Activated CD8-positive, alpha-beta T cell treated with anti-CD3 and anti-CD28 coated beads for 36 hours (primary cell): ENCODE measurements at regions of chr11 and their contacts with region 1.

Region 1: DNA sequence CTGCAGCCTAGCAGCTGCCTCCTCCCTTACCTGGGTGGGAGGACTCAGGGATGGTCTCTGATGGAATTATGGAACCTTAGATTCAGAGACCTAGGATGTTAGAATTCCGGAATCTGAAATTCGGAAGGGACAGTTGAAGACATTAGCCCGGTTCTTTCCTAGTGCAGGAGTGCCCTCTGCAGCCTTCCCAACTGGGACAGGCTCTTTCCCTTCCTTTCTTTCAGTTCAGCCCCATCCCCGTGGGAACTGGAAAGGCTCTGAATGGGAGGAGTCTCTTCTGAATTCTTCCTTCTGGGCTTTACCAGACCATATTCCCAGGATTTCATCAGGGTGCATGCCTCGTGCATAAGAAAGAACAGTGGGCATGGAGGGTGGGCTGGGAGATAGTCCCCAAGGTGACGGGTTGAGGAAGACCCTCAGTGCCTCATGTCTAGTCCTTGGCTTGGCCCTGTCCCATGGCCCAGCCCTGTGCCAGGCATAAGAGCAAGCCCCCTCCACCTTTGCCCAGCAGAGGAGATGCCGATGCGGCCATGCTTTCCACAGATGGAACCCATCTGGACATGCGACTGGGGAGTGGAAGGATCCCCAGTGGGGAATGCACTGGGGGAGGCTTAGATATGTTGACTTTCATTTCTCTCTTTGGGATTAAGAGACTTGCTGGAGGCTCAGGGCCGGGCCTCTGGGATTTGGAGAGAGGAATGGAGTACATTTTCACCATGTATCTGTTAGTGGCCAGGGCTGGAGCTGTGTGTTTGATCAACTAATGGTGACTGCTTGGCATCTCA is 14.4 kb downstream of the DNAJB13 start:
- DNase-seq: no peak
- ATAC-seq: no peak
- H3K4me3 Mint-ChIP-seq: no peak overlapping the region
- H3K27ac Mint-ChIP-seq: no peak overlapping the region
- H3K4me1 Mint-ChIP-seq: peaks cover 42% of the 10 kb centered on the region
- H3K27me3 Mint-ChIP-seq: no peaks in the 10 kb centered on the region
- CTCF ChIP-seq: no peak

Region 2: GRCh38 chr11:73907191-73907590 is 58.1 kb before region 1 on chr11:
- CTCF ChIA-PET with region 1: no interaction called
- POLR2A ChIA-PET with region 1: no interaction called
- intact Hi-C with region 1: no loop called
- DNase-seq: peak; percentile 39
- ATAC-seq: peak; percentile 82
- H3K4me3 Mint-ChIP-seq: no peak overlapping the region
- H3K27ac Mint-ChIP-seq: peak overlapping the region; percentile 3
- H3K4me1 Mint-ChIP-seq: no peaks in the 10 kb centered on the region
- H3K27me3 Mint-ChIP-seq: no peaks in the 10 kb centered on the region
- CTCF ChIP-seq: no peak

Region 3: GRCh38 chr11:73946798-73947458 is 18.3 kb before region 1 on chr11:
- CTCF ChIA-PET with region 1: interaction called, 10 read pairs
- POLR2A ChIA-PET with region 1: no interaction called
- intact Hi-C with region 1: no loop called
- DNase-seq: no peak
- ATAC-seq: no peak
- H3K4me3 Mint-ChIP-seq: no peak overlapping the region
- H3K27ac Mint-ChIP-seq: no peak overlapping the region
- H3K4me1 Mint-ChIP-seq: no peaks in the 10 kb centered on the region
- H3K27me3 Mint-ChIP-seq: no peaks in the 10 kb centered on the region
- CTCF ChIP-seq: no peak

Region 4: DNA sequence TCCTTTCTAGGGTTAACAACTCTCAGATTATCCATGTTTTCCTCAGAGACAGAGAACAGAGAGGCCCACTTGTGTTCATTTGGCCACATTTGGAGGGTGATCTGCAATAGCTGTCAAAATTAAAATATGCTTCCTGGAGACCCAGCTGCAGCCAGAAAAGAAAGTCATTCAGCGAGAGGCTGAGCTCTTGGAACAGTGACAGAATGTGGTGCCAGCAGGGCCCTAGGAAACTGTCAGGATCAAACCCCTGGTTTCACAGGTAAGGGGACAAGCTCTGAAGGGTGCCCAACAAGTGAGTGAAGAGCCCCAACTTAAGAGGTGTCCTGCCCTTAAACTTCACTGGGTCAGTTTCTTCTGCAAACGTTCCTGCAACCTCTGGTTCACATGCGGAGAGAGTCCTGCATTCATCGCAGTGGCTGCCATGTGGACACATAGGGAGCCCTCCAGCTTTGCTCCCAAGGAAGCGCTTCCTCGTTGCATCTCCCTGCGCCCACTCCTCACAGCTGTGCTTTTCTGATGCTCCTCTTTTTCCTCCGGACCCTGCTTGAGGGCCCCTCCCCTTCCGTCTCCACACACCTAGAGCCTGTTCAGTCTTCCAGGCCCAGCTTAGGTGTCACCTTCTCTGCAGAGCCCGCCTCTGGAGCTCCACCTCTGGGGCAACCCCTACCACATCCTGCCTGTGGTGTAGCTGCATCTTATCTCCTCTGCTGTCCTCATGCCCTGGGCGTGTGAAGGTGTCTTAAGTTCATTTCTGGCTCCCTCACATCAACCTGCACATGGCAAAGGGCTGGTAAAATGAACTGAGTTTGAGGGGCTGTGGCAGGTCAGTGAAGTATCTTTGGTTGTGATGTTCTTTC is 39.7 kb after region 1 on chr11:
- CTCF ChIA-PET with region 1: interaction called, 4 read pairs
- POLR2A ChIA-PET with region 1: interaction called, 269 read pairs
- intact Hi-C with region 1: loop called (anchors 5 kb)
- DNase-seq: peak; percentile 96
- ATAC-seq: peak; percentile 99
- H3K4me3 Mint-ChIP-seq: peak overlapping the region; percentile 65
- H3K27ac Mint-ChIP-seq: peak overlapping the region; percentile 91
- H3K4me1 Mint-ChIP-seq: peaks cover 82% of the 10 kb centered on the region
- H3K27me3 Mint-ChIP-seq: no peaks in the 10 kb centered on the region
- CTCF ChIP-seq: no peak

Region 5: DNA sequence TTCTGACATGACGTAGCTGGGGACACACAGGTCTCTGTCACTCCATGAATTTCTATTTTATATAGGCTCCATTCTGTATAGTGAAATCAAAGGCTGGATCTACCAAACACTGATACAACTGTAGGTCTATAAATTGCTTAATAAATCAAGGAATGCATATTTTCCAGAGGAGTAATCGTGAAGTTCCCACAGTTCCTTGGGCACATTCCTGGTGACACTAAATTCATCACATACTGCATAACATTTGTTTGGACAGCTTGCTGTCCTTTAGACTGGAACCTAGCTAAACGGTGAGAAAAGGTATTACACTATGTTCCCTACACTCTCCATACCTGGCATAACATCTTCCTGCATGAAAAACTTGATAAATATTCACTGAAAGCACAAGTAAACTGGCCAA is 85.2 kb after region 1 on chr11:
- CTCF ChIA-PET with region 1: interaction called, 12 read pairs
- POLR2A ChIA-PET with region 1: interaction called, 3 read pairs
- intact Hi-C with region 1: no loop called
- DNase-seq: no peak
- ATAC-seq: no peak
- H3K4me3 Mint-ChIP-seq: no peak overlapping the region
- H3K27ac Mint-ChIP-seq: no peak overlapping the region
- H3K4me1 Mint-ChIP-seq: no peaks in the 10 kb centered on the region
- H3K27me3 Mint-ChIP-seq: no peaks in the 10 kb centered on the region
- CTCF ChIP-seq: no peak